Calu3 (cell line): ENCODE measurements at regions of chr19 and their contacts with region 1.

Region 1: GRCh38 chr19:55339048-55339888 is at the start of gene KMT5C:
- DNase-seq: peak; percentile 100
- H3K4me3 Mint-ChIP-seq: peak within 1 kb of the TSS; percentile 91
- H3K27ac Mint-ChIP-seq: peak within 1 kb of the TSS; percentile 97
- H3K4me1 Mint-ChIP-seq: peaks cover 20% of the 10 kb centered on the region
- H3K27me3 Mint-ChIP-seq: no peaks in the 10 kb centered on the region
- CTCF ChIP-seq: no peak
- total RNA-seq, gene KMT5C: 16.1 and 23.5 TPM in 2 replicates

Region 2: GRCh38 chr19:55301459-55302317 is 37.6 kb before region 1 on chr19:
- CTCF ChIA-PET with region 1: interaction called, 35 read pairs
- intact Hi-C with region 1: no loop called
- DNase-seq: peak; percentile 96
- H3K4me3 Mint-ChIP-seq: peak overlapping the region; percentile 75
- H3K27ac Mint-ChIP-seq: peak overlapping the region; percentile 42
- H3K4me1 Mint-ChIP-seq: peaks cover 10% of the 10 kb centered on the region
- H3K27me3 Mint-ChIP-seq: peaks cover 33% of the 10 kb centered on the region
- CTCF ChIP-seq: peak; percentile 99

Region 3: GRCh38 chr19:55325172-55325571 is 14.1 kb before region 1 on chr19 and contains the start of gene TMEM150B:
- CTCF ChIA-PET with region 1: interaction called, 11 read pairs
- intact Hi-C with region 1: no loop called
- DNase-seq: no peak
- H3K4me3 Mint-ChIP-seq: no peak within 1 kb of the TSS
- H3K27ac Mint-ChIP-seq: no peak within 1 kb of the TSS
- H3K4me1 Mint-ChIP-seq: peaks cover 18% of the 10 kb centered on the region
- H3K27me3 Mint-ChIP-seq: peaks cover 17% of the 10 kb centered on the region
- CTCF ChIP-seq: no peak
- total RNA-seq, gene TMEM150B: 0.73 TPM in 1 of 2 replicates, not detected in the other

Region 4: GRCh38 chr19:55353803-55354697 is 14.8 kb after region 1 on chr19:
- CTCF ChIA-PET with region 1: interaction called, 13 read pairs
- intact Hi-C with region 1: no loop called
- DNase-seq: peak; percentile 84
- H3K4me3 Mint-ChIP-seq: peak overlapping the region; percentile 79
- H3K27ac Mint-ChIP-seq: no peak overlapping the region
- H3K4me1 Mint-ChIP-seq: peaks cover 33% of the 10 kb centered on the region
- H3K27me3 Mint-ChIP-seq: peaks cover 82% of the 10 kb centered on the region
- CTCF ChIP-seq: no peak

Region 5: DNA sequence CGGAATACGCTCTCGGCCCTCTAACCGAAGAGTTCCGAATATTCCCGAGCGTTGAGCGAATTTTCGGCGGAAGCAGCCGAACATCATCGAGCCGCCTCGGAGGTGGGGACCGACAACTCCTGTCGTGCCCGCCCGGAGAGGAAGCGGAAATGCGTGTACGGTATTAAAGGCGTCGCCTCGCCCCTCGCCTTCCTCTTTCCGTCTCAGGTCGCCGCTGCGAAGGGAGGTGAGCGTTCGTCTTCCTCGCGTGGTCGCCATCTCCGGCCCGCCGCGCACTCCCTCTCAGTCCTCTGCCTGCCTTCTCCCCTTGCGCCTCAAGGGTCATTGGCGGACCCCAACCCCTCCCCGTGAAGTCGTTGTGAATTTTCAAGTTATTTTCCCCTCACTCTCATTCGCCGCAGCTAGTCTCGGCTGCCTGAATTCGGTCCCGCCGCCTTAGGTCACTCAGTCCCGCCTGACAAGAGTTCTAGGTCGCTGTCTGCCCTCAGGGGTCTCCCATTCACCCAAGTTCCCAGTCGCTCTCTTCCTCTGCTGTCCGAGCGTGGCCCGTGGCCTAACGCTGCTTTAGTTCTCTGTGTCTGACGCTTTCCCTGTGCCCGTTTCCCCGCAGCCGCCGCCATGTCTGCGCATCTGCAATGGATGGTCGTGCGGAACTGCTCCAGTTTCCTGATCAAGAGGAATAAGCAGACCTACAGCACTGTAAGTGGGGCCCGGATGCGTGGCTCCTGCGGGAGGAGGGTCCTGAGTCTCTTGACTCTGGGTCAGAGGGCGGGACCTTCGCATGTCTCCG is 46.7 kb after region 1 on chr19 and contains the start of gene RPL28:
- CTCF ChIA-PET with region 1: interaction called, 7 read pairs
- intact Hi-C with region 1: loop called (anchors 5 kb)
- DNase-seq: peak; percentile 99
- H3K4me3 Mint-ChIP-seq: peak within 1 kb of the TSS; percentile 91
- H3K27ac Mint-ChIP-seq: peak within 1 kb of the TSS; percentile 97
- H3K4me1 Mint-ChIP-seq: peaks cover 49% of the 10 kb centered on the region
- H3K27me3 Mint-ChIP-seq: no peaks in the 10 kb centered on the region
- CTCF ChIP-seq: no peak
- total RNA-seq, gene RPL28: 1,462 and 1,520 TPM in 2 replicates